Activated CD4-positive, alpha-beta T cell treated with anti-CD3 and anti-CD28 coated beads for 36 hours (primary cell): ENCODE measurements at regions of chr11 and their contacts with region 1.

Region 1: DNA sequence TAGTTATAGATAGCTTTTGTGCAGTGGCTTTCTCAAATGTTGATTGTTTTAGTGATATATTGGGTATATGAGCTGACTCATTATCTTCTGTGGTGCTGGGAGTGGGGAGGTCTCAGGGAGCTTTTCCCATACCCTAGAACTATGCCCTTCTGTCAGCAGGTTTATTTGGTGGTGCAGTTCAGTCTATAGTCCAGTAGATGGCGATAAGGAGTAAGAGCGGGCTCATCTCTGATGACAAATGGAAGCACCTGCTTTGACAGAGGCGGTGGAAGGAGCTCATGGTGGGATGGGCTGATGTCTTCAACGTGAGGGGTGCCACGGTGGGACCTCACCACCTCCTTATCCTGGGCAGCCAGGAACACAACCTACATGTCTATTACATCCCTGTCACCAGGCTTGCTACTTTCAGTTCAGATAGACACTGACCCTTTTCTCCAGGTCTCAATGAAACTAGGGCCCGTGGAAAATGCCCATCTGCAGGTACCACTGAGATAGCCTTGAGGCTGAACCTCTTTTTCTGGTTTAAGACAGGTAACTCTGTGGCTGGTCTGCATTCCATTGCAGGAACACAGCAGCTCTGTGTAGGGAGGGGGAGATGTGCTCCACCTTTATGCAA is 13.0 kb upstream of the OR6A2 start:
- DNase-seq: peak; percentile 43
- ATAC-seq: peak; percentile 85
- H3K4me3 Mint-ChIP-seq: no peak overlapping the region
- H3K27ac Mint-ChIP-seq: no peak overlapping the region
- H3K4me1 Mint-ChIP-seq: no peaks in the 10 kb centered on the region
- H3K27me3 Mint-ChIP-seq: peaks cover 10% of the 10 kb centered on the region

Region 2: DNA sequence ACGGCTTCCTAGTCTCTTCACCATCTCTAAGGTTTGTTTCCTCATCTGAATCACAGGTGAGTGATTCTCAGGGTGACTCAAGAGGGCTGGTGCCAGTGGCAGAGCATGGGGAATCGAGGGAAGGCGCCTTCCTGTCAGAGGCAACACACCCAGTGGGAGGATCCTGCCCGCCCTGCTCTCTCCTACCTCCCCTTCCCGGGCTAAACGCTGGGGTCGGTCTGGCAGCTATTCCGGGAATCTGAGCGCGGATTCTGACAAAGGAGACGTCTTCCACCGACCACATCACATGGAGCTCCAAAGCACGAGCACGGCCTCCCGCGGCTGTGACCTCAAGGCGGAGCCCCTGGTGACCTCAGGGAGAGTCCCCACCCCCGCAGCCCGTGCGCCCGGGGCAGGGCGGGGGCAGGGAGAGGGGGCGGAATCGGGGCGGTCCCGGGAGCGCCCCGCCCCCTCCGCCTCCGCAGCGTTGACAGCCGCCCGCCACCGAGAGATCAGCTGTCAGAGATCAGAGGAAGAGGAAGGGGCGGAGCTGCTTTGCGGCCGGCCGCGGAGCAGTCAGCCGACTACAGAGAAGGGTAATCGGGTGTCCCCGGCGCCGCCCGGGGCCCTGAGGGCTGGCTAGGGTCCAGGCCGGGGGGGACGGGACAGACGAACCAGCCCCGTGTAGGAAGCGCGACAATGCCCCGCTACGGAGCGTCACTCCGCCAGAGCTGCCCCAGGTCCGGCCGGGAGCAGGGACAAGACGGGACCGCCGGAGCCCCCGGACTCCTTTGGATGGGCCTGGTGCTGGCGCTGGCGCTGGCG is 422.4 kb before region 1 on chr11 and contains the start of gene SMPD1:
- CTCF ChIA-PET with region 1: no interaction called
- POLR2A ChIA-PET with region 1: no interaction called
- intact Hi-C with region 1: no loop called
- DNase-seq: peak; percentile 97
- ATAC-seq: peak; percentile 90
- H3K4me3 Mint-ChIP-seq: peak within 1 kb of the TSS; percentile 77
- H3K27ac Mint-ChIP-seq: peak within 1 kb of the TSS; percentile 93
- H3K4me1 Mint-ChIP-seq: peaks cover 55% of the 10 kb centered on the region
- H3K27me3 Mint-ChIP-seq: no peaks in the 10 kb centered on the region
- total RNA-seq, gene SMPD1: 13.1 to 14.1 TPM

Region 3: GRCh38 chr11:6799402-6799801 is 13.1 kb before region 1 on chr11 and contains the start of gene OR6A2:
- CTCF ChIA-PET with region 1: interaction called, 13 read pairs
- POLR2A ChIA-PET with region 1: no interaction called
- intact Hi-C with region 1: no loop called
- DNase-seq: no peak
- ATAC-seq: peak; percentile 69
- H3K4me3 Mint-ChIP-seq: no peak within 1 kb of the TSS
- H3K27ac Mint-ChIP-seq: no peak within 1 kb of the TSS
- H3K4me1 Mint-ChIP-seq: no peaks in the 10 kb centered on the region
- H3K27me3 Mint-ChIP-seq: no peaks in the 10 kb centered on the region
- total RNA-seq, gene OR6A2: 0.14 to 0.25 TPM

Region 4: GRCh38 chr11:6926208-6927029 is 113.9 kb after region 1 on chr11 and contains the start of gene ZNF215:
- CTCF ChIA-PET with region 1: no interaction called
- POLR2A ChIA-PET with region 1: no interaction called
- intact Hi-C with region 1: loop called in 1 of 2 experiments (anchors 5 kb)
- DNase-seq: peak; percentile 81
- ATAC-seq: peak; percentile 80
- H3K4me3 Mint-ChIP-seq: peak within 1 kb of the TSS; percentile 80
- H3K27ac Mint-ChIP-seq: peak within 1 kb of the TSS; percentile 51
- H3K4me1 Mint-ChIP-seq: peaks cover 23% of the 10 kb centered on the region
- H3K27me3 Mint-ChIP-seq: peaks cover 36% of the 10 kb centered on the region
- total RNA-seq, gene ZNF215: 3.6 TPM

Region 5: DNA sequence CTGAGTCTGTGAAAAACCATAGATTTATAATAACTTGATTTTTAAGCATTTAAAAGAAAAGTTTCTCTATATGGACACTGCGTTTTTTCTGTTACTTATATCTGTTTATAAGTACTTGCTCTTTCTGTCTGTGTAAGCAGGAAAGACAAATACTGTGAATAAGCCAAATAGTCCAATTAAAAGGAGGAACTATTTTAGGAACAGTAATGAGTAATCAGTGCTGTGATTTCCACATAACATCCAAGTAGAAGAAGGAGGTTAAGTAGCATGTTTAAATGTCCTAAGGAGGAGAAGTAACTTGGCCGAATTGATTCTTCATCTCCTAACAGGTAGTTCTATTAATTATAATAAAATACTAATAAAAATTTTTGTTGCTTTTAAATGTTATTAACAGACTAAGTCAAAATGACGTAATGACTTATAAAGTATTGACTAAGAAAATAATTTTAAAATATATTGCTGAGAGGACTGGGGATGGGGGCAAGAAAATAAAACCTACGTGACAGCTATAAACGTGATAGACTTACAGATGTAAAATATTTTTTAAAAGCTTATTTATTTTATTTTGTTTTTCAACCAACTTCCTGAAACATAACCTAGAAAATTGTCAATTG is 167.0 kb after region 1 on chr11:
- CTCF ChIA-PET with region 1: no interaction called
- POLR2A ChIA-PET with region 1: no interaction called
- intact Hi-C with region 1: loop called in 1 of 2 experiments (anchors 5 kb)
- DNase-seq: no peak
- ATAC-seq: no peak
- H3K4me3 Mint-ChIP-seq: no peak overlapping the region
- H3K27ac Mint-ChIP-seq: no peak overlapping the region
- H3K4me1 Mint-ChIP-seq: no peaks in the 10 kb centered on the region
- H3K27me3 Mint-ChIP-seq: no peaks in the 10 kb centered on the region

Region 6: DNA sequence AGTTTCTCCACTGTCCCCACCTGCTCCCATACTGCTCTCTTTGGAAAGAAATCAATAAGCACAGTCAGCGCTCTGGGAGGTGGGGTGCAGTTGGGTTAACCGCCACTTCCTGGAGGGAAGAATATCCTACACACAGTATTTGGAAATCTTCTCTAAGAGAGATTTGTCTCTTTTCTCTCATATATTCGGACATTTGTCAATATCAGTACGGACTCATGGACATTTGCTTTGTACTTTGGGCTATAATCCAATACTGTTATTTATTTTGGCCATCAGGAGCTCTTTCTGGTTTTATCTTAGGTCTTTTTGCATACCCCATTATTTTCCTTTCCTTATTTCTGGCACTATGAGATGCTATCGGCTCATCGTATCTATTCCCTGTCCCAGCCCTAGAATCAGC is 221.5 kb after region 1 on chr11:
- CTCF ChIA-PET with region 1: no interaction called
- POLR2A ChIA-PET with region 1: no interaction called
- intact Hi-C with region 1: no loop called
- DNase-seq: no peak
- ATAC-seq: no peak
- H3K4me3 Mint-ChIP-seq: no peak overlapping the region
- H3K27ac Mint-ChIP-seq: no peak overlapping the region
- H3K4me1 Mint-ChIP-seq: no peaks in the 10 kb centered on the region
- H3K27me3 Mint-ChIP-seq: peaks cover 2% of the 10 kb centered on the region

Region 7: DNA sequence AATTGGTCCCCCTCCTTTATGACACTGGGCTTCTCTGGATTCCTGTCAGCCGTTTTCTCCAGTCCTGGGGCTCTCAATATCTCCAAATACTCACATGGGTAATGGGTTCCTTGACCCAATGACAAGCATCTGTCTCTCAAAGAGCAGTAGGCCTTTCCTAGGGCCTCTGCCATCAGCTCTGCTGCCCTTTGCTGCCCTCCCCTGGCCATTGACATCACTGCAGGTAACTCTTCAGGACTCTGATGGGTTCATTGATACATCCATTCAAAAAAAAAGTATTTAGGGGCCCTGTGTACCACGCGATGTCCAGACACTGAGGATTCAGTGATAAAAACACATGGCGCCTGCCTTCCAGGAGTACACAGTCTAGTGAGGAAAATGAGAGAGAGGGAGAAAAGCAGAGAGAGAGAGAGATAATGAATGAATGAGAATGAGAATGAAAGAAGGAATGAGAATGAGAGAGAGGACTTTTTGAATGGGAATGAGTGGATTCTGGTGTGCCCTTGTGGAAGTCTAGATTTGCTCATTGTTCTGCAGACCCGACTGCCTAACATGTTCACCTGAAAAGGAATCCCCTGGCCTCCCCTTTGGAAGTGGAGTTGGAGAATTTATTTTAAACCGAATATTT is 630.2 kb after region 1 on chr11:
- CTCF ChIA-PET with region 1: interaction called, 3 read pairs
- POLR2A ChIA-PET with region 1: no interaction called
- intact Hi-C with region 1: loop called in 1 of 2 experiments (anchors 2 kb)
- DNase-seq: peak; percentile 85
- ATAC-seq: peak; percentile 89
- H3K4me3 Mint-ChIP-seq: no peak overlapping the region
- H3K27ac Mint-ChIP-seq: no peak overlapping the region
- H3K4me1 Mint-ChIP-seq: no peaks in the 10 kb centered on the region
- H3K27me3 Mint-ChIP-seq: no peaks in the 10 kb centered on the region